ENCODE measurements at regions of chr16 and their contacts with region 1.

Region 1: DNA sequence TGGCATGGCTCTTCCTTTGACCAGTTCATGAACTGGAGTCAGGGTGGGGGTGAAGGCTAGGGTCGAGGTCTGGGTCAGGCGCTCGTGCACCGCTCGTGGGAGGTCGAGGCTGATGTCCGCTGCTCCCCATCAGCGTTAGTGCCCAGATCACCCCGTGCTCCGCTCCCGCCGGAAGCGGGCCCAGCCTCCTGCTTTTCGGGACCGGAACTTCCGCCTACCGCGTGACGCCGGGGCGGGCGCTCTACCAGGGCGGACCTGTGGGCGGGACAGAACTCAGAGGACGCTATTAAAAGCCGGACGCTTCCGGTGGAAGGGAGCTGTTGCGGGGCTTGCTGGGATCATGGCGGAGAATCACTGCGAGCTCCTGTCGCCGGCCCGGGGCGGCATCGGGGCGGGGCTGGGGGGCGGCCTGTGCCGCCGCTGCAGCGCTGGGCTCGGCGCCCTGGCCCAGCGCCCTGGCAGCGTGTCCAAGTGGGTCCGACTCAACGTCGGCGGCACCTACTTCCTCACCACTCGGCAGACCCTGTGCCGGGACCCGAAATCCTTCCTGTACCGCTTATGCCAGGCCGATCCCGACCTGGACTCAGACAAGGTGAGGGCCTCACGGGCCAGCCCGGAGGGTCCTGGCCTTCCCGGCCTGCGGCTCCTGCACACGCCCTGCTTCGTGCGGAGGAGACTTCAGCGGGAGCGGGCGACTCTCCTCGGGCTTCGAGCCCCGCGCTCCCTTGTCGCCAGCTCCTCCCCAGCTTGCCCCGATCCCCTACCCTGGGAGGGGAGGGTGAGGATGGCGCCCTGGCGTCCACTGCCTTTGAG is at the start of gene KCTD5:
- DNase-seq: peak; percentile 92
- ATAC-seq: peak; percentile 82
- H3K4me3 ChIP-seq: peak within 1 kb of the TSS; percentile 99
- H3K27ac ChIP-seq: peak within 1 kb of the TSS; percentile 96
- H3K4me1 ChIP-seq: peaks cover 24% of the 10 kb centered on the region
- H3K27me3 ChIP-seq: no peaks in the 10 kb centered on the region
- CTCF ChIP-seq: no peak
- total RNA-seq, gene KCTD5: 52.2 and 62.1 TPM in 2 replicates

Region 2: DNA sequence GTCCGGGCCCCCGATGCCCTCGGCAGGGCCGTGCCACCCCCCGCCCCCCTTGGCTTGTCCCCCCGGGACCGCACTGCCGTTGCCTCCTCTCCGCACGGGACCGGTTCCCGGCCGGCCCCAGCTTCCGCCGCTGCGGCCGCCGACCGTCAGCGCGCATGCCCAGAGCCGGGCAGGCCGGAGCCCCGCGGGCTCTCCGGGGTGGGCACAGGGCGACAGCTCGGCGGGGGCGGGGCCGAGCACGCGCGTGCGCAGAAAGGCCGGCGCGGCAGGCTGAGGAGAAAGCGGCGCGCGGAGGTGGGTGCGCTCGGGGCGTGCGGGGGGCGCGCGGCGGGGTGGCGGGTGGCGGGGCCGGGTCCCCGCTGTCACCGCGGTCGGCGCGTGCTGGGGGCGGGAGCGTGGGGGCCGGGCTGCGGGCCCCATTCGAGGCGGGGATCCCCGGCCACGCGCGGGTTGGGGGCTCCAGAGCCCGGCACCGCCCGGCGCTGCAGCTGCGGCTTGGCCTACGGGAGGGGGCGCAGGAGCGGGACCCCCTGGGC is 207.5 kb before region 1 on chr16 and contains the start of gene TBC1D24:
- CTCF ChIA-PET with region 1: no interaction called
- POLR2A ChIA-PET with region 1: no interaction called
- intact Hi-C with region 1: no loop called
- DNase-seq: peak; percentile 83
- ATAC-seq: peak; percentile 70
- H3K4me3 ChIP-seq: peak within 1 kb of the TSS; percentile 77
- H3K27ac ChIP-seq: no peak within 1 kb of the TSS
- H3K4me1 ChIP-seq: no peaks in the 10 kb centered on the region; the same call in 1 of the 2 replicates
- H3K27me3 ChIP-seq: no peaks in the 10 kb centered on the region
- CTCF ChIP-seq: no peak
- total RNA-seq, gene TBC1D24: 11.3 and 15.2 TPM in 2 replicates

Region 3: DNA sequence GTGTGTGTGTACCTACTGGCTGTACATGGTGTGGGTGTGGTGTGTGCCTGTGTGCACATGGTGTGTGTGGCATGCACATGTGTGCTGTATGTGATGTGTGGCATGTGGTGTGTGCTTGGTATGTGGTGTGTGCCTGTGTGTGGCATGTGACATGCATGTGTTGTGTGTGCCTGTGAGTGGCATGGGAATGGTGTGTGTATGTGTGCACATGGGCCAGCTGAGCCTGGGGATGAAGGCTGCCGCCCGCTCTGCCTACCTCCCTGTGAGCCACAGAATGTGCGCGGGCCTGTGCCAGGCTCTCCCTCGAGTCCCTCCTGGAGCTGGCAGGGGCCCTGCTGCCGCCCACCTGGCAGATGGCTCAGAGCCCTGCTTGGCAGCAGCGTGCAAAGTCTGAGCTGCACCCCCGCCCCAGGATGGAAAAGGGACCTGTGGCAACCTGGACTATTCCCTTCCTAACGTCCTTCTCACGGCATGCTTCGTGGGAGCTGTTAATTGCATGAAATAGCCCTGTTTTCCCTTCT is 28.4 kb after region 1 on chr16:
- CTCF ChIA-PET with region 1: no interaction called
- POLR2A ChIA-PET with region 1: no interaction called
- intact Hi-C with region 1: no loop called
- DNase-seq: no peak
- ATAC-seq: no peak; the same call in 1 of the 2 replicates
- H3K4me3 ChIP-seq: no peak overlapping the region
- H3K27ac ChIP-seq: no peak overlapping the region
- H3K4me1 ChIP-seq: no peaks in the 10 kb centered on the region
- H3K27me3 ChIP-seq: no peaks in the 10 kb centered on the region
- CTCF ChIP-seq: no peak

Region 4: DNA sequence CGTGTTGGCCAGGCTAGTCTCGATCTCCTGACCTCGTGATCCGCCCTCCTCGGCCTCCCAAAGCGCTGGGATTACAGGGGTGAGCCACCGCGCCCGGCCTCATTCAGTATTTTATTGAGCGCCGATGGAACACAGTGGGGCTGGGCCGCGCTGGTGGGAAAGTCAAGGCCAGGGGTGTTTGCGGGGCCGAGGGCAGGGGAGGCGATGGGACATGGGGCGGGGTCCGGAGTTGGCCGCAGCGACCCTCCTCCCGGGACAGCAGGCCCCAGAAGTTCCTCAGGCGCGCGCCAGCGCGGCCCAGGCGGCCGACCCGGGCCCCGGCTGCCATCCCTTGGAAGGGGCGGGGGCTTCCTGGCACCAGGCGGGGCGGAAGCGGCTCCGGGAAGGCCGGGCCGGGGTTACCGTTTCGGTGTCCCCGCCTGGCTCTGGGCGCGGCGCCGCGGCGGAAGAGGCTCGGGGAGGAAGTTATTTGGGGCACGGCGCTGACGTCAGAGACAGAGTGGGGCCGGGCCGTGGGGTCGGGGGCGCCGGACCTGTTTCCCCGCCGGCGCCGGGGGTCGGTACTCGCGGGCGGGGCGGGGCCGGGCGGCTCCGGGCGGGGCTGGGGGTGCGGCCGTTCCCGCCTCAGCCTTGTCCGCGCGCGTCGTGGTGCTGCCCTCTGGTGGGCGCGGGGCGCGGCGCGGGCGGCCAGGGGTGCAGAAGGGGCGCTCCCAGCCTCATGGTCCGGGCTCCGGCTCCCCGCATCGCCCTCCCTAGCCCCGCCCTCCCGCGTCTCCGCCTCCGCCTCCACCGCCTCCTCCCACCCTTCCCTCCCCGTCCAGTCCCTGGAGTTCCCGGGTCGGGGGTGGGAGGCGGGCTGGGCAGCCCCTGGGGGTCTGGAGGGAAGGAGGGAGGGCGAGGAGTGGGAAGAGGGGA is 38.6 kb after region 1 on chr16:
- CTCF ChIA-PET with region 1: no interaction called
- POLR2A ChIA-PET with region 1: no interaction called
- intact Hi-C with region 1: loop called (anchors 5 kb)
- DNase-seq: peak; percentile 80
- ATAC-seq: peak; percentile 78
- H3K4me3 ChIP-seq: peak overlapping the region; percentile 68
- H3K27ac ChIP-seq: peak overlapping the region; percentile 42; the same call in 1 of the 2 replicates
- H3K4me1 ChIP-seq: peaks cover 15% of the 10 kb centered on the region
- H3K27me3 ChIP-seq: no peaks in the 10 kb centered on the region
- CTCF ChIP-seq: 0 out of 2 replicates have a peak, but pooled peaks have one; percentile 17